Endothelial cell of umbilical vein (primary cell): ENCODE measurements at regions of chr11 and their contacts with region 1.

Region 1: GRCh38 chr11:47314992-47315391 is 37.5 kb downstream of the MYBPC3 start:
- DNase-seq: no peak
- H3K4me3 ChIP-seq: no peak overlapping the region
- H3K27ac ChIP-seq: no peak overlapping the region
- H3K4me1 ChIP-seq: no peaks in the 10 kb centered on the region
- H3K27me3 ChIP-seq: no peaks in the 10 kb centered on the region
- CTCF ChIP-seq: no peak
- POLR2A ChIP-seq: no peak

Region 2: GRCh38 chr11:47348859-47349258 is 33.9 kb after region 1 on chr11:
- CTCF ChIA-PET with region 1: no interaction called
- POLR2A ChIA-PET with region 1: no interaction called
- dilution Hi-C with region 1: no loop called
- intact Hi-C with region 1: loop called (anchors 5 kb)
- DNase-seq: no peak
- H3K4me3 ChIP-seq: no peak overlapping the region
- H3K27ac ChIP-seq: no peak overlapping the region
- H3K4me1 ChIP-seq: no peaks in the 10 kb centered on the region
- H3K27me3 ChIP-seq: no peaks in the 10 kb centered on the region
- CTCF ChIP-seq: peak in 1 of 2 donors; percentile 16
- POLR2A ChIP-seq: no peak